ENCODE measurements at regions of chr16 and their contacts with region 1.

Region 1: GRCh38 chr16:81035398-81035974 is at the start of gene ATMIN:
- DNase-seq: peak; percentile 59 to 88 (median 72)
- H3K4me3 ChIP-seq: peak within 1 kb of the TSS; percentile 61 to 97 (median 80)
- H3K27ac ChIP-seq: peak within 1 kb of the TSS in 52 of 59 donors; percentile 15 to 88 (median 72)
- H3K27me3 ChIP-seq: no peaks in the 10 kb centered on the region
- CTCF ChIP-seq: peak; percentile 66 to 99 (median 94)
- total RNA-seq, gene ATMIN: 38.2 to 76.8 (median 57.2) TPM

Region 2: DNA sequence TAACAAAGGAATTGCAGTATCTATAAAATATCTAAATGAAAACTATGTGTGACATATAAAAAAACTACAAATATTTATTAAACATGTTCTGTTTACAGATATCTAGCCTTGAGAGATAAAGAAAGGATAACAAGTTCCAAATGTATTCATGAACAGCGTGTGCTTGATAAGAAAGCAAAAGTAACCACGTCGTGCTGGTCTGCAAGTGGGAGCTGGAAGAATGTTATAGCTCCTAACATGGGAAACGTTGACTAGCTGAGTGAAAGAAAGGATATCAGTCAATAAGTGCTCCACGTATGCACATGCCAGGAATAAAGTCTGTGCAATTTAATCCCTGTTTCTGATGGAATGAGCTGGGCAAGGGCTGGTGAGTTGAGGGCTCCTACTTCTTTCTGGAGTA is 159.9 kb before region 1 on chr16:
- intact Hi-C with region 1: no loop called
- DNase-seq: no peak
- H3K4me3 ChIP-seq: no peak overlapping the region
- H3K27ac ChIP-seq: no peak overlapping the region
- H3K27me3 ChIP-seq: no peaks in the 10 kb centered on the region
- CTCF ChIP-seq: no peak

Region 3: DNA sequence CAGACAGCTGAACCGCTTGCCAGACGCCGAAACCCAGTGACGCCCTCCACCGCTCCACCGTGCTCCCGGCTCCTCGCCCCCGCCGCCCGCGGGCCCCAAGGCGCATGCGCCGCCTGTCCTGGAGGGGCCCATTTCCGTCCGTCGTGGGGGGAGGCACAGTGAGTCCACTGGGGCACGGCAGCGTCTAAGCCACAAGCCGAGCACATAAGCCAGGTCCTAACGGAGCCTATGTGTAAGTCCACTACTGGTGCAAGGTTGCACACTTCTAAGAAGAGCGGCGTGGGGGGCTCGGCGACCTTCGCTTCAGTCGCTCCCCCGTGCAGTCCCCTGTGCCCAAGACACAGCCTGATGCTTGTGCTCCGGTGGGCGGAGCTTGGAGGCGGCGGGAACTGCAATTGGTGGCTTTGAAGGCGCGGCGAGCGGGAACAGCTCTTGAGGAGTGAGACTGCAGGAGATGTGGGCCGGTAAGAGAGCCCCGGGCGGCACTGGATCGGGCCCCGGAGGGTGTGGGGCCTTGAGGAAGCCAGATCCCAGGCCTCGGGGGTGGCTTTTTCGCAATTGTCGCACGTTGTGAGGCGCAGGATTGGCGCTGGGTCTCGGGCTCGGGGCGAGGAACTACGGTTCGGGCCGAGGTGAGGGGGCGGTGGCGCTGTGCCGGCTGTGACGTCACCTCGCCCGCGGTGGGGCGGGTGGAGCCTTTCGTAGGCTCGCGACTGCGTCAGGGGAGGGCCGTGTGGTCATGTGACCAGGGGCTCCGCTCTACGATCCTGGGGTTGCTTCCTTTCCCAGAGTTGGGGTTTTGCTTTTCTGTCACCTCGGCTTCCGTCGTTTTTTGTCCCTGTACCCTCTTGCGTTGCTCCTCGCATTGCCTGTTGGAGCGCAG is 28.4 kb before region 1 on chr16 and contains the starts of genes CENPN and CMC2:
- intact Hi-C with region 1: loop called (anchors 2 kb)
- DNase-seq: peak; percentile 98 to 99 (median 99)
- H3K4me3 ChIP-seq: peak within 1 kb of the TSS; percentile 63 to 100 (median 97)
- H3K27ac ChIP-seq: peak within 1 kb of the TSS; percentile 94 to 100 (median 100)
- H3K27me3 ChIP-seq: no peaks in the 10 kb centered on the region
- CTCF ChIP-seq: peak in 27 of 56 donors; percentile 8 to 42 (median 28)
- total RNA-seq, gene CENPN: 2.4 to 13.8 (median 6.3) TPM
- total RNA-seq, gene CMC2: 53.6 to 107 (median 84.9) TPM

Region 4: GRCh38 chr16:81095953-81096717 is 60.6 kb after region 1 on chr16 and contains the start of gene GCSH:
- intact Hi-C with region 1: loop called (anchors 5 kb)
- DNase-seq: peak; percentile 97 to 100 (median 99)
- H3K4me3 ChIP-seq: peak within 1 kb of the TSS; percentile 61 to 98 (median 88)
- H3K27ac ChIP-seq: peak within 1 kb of the TSS in 53 of 59 donors; percentile 9 to 90 (median 71)
- H3K27me3 ChIP-seq: no peaks in the 10 kb centered on the region
- CTCF ChIP-seq: peak in 33 of 56 donors; percentile 11 to 56 (median 26)
- total RNA-seq, gene GCSH: 28.2 to 78.2 (median 45.7) TPM

Region 5: GRCh38 chr16:81314603-81315270 is 279.3 kb after region 1 on chr16 and contains the start of gene GAN:
- intact Hi-C with region 1: loop called in 1 of 2 experiments (anchors 5 kb)
- DNase-seq: peak; percentile 91 to 98 (median 96)
- H3K4me3 ChIP-seq: peak within 1 kb of the TSS; percentile 64 to 98 (median 88)
- H3K27ac ChIP-seq: peak within 1 kb of the TSS in 57 of 59 donors; percentile 9 to 91 (median 77)
- H3K27me3 ChIP-seq: no peaks in the 10 kb centered on the region
- CTCF ChIP-seq: peak in 36 of 56 donors; percentile 5 to 59 (median 23)
- total RNA-seq, gene GAN: 31.2 to 66.5 (median 46.5) TPM

Region 6: DNA sequence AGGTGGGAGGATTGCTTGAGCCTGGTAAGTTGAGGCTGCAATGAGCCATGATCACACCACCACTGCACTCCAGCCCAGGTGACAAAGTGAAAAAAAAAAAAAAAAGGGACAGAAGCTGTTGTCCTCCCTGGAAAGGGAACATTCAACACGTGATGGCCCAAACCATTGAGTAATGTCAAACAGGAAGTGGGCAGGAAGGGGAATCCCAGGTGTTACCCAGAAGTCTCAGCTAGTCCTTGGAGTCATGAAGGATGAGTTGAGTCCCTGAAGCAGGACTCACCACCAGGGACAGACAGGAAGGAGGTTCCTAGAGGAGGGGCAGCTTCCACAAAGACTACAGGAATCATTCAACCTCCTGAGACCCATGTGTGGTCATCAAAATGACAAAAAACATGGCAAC is 389.3 kb after region 1 on chr16:
- intact Hi-C with region 1: no loop called
- DNase-seq: no peak
- H3K4me3 ChIP-seq: no peak overlapping the region
- H3K27ac ChIP-seq: no peak overlapping the region
- H3K27me3 ChIP-seq: no peaks in the 10 kb centered on the region
- CTCF ChIP-seq: no peak

Measured in dorsolateral prefrontal cortex (tissue), 120 donors.